Naive thymus-derived CD8-positive, alpha-beta T cell (primary cell): ENCODE measurements at regions of chr19 and their contacts with region 1.

Region 1: DNA sequence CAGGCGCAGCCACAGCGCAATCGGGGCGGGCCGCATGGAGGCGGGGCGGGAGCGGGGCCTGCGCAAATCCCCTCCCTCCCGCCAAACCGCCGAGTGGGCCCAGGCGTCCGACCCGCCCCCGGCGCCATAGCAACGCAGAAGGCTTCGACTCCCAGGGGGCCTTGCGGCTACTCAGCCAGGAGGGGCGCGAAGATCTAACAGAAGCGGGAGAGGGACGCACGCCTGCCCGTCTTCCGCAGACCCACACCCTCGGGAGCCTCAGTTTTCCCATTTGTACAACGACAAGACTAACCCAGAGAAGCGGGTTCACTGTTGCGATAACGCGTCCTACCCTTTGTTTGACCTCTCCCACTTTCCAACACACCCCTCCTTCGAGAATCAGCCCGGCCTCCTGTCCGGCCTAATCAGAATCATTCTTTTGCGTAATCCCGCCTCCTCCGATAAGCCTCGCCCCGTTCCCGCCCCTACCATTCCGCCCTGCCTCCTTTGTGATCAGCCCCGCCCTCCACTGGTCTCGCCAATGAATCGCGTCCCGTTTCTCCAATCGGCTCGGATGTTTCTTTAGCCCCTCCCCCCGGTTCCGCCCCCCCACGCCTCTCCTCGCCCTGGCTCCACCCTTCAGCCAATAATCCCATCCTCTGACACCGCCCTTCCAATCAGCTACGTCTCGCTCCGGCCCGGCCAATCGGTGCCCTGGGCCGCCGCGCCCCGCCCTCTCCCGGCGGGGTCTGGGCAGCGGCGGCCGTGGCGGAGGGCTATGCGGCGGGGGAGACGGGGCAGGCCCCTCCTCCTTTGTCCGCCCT is at the start of gene PCSK4:
- DNase-seq: peak; percentile 94 to 100 (median 98)
- ATAC-seq: peak; percentile 84 to 88
- H3K4me3 Mint-ChIP-seq: peak within 1 kb of the TSS; percentile 85 to 93 (median 88)
- H3K27ac Mint-ChIP-seq: peak within 1 kb of the TSS; percentile 14 to 97 (median 89)
- H3K4me1 Mint-ChIP-seq: peaks cover 8 to 22% (median 15%) of the 10 kb centered on the region in 4 donors
- H3K27me3 Mint-ChIP-seq: no peaks in the 10 kb centered on the region
- polyA plus RNA-seq, gene PCSK4: 0.35 to 1.3 (median 1.2) TPM

Region 2: GRCh38 chr19:1455336-1456120 is 35.0 kb before region 1 on chr19:
- POLR2A ChIA-PET with region 1: interaction called, 10 read pairs
- DNase-seq: peak in 8 of 10 donors; percentile 47 to 60 (median 52)
- ATAC-seq: peak; percentile 70 to 76
- H3K4me3 Mint-ChIP-seq: peak overlapping the region in 9 of 10 donors; percentile 28 to 79 (median 36)
- H3K27ac Mint-ChIP-seq: peak overlapping the region in 2 of 10 donors; percentile 25 to 52
- H3K4me1 Mint-ChIP-seq: peaks cover 7 to 24% (median 19%) of the 10 kb centered on the region in 4 donors
- H3K27me3 Mint-ChIP-seq: peaks cover 13 to 54% (median 26%) of the 10 kb centered on the region in 5 donors

Region 3: DNA sequence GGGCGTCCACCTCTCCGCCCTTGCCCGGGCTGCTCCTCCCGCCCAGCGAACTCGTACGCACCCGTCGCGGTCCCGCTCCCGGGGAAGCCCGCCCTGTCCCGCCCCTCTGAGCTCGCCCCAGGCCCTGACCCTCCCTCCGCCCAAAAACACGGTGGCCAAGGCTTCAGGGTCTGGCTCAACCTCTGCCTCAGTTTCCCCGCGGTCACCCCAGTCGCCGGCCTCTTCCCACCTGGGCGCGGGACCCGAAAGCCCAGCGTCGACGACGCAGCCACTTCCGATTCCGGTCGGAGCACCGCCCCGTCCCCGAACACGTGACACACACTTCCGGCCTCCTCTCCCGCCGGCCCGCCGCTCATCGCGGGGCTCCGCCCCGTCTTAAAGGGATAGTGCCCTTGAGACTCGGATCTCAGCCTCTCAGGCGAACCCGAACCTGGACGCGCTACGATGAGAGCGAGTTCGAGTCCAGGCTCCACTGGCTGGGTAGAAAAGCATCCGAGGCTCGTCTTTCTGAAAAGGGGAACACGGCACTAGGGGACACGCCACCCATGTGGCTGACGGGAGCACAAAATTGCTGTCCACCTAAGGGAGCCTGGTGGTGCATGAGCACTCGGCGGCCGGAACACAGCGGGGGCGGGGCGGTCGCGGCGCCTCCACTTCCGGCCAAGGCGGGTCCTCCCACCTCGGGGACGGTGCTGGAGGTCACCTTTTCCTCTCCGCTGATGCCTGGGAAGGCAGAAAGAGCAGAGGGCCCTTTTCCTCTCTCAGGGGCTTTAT is 11.4 kb before region 1 on chr19 and contains the start of gene C19orf25:
- POLR2A ChIA-PET with region 1: interaction called, 14 read pairs
- DNase-seq: peak; percentile 82 to 94 (median 86)
- ATAC-seq: peak; percentile 96 to 98
- H3K4me3 Mint-ChIP-seq: peak within 1 kb of the TSS; percentile 96 to 100 (median 98)
- H3K27ac Mint-ChIP-seq: peak within 1 kb of the TSS; percentile 93 to 99 (median 97)
- H3K4me1 Mint-ChIP-seq: peaks cover 7 to 24% (median 16%) of the 10 kb centered on the region in 4 donors
- H3K27me3 Mint-ChIP-seq: no peaks in the 10 kb centered on the region
- polyA plus RNA-seq, gene C19orf25: 31.3 to 50.3 (median 32.5) TPM

Region 4: DNA sequence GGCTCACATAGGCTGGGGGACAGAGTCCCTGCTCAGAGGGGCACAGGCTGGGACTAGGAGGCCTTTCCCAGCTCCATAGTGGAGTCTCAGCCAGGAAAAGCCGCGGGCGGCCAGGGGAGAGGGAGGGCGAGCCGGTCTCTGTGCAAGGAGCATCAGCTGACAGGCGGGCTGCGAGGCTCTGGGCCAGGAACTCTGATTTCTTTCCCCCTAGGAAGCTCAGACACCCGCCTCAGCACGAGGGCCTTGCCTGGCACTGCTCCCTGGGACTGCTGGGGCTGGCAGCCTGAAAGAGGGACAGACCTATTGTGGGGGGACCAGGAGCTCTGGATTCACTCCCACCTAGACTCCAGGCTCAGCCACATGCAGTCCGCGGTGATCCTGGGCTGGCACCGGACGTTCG is 31.1 kb after region 1 on chr19:
- POLR2A ChIA-PET with region 1: no interaction called
- DNase-seq: no peak
- ATAC-seq: no peak
- H3K4me3 Mint-ChIP-seq: no peak overlapping the region
- H3K27ac Mint-ChIP-seq: peak overlapping the region in 1 of 10 donors; percentile 24
- H3K4me1 Mint-ChIP-seq: peaks cover 6 to 11% (median 9%) of the 10 kb centered on the region in 4 donors
- H3K27me3 Mint-ChIP-seq: peaks cover 15 to 53% (median 25%) of the 10 kb centered on the region in 5 donors

Region 5: GRCh38 chr19:1747285-1748114 is 257.0 kb after region 1 on chr19:
- POLR2A ChIA-PET with region 1: no interaction called
- DNase-seq: peak in 4 of 10 donors; percentile 15 to 73 (median 34)
- ATAC-seq: peak; percentile 56 to 65
- H3K4me3 Mint-ChIP-seq: peak overlapping the region in 9 of 10 donors; percentile 29 to 74 (median 64)
- H3K27ac Mint-ChIP-seq: peak overlapping the region in 1 of 10 donors; percentile 37
- H3K4me1 Mint-ChIP-seq: peaks cover 8 to 23% (median 19%) of the 10 kb centered on the region in 4 donors
- H3K27me3 Mint-ChIP-seq: peaks cover 21 to 65% (median 27%) of the 10 kb centered on the region in 5 donors